ENCODE measurements at regions of chr6 and their contacts with region 1.

Region 1: GRCh38 chr6:165873976-165874375 is 210.9 kb upstream of the PDE10A start:
- DNase-seq: no peak

Region 2: GRCh38 chr6:165834613-165835259 is 39.2 kb before region 1 on chr6:
- intact Hi-C with region 1: loop called in 1 of 2 experiments (anchors 1 kb)
- DNase-seq: peak; percentile 75